Stomach (tissue), 19 donors: ENCODE measurements at regions of chr9 and their contacts with region 1.

Region 1: DNA sequence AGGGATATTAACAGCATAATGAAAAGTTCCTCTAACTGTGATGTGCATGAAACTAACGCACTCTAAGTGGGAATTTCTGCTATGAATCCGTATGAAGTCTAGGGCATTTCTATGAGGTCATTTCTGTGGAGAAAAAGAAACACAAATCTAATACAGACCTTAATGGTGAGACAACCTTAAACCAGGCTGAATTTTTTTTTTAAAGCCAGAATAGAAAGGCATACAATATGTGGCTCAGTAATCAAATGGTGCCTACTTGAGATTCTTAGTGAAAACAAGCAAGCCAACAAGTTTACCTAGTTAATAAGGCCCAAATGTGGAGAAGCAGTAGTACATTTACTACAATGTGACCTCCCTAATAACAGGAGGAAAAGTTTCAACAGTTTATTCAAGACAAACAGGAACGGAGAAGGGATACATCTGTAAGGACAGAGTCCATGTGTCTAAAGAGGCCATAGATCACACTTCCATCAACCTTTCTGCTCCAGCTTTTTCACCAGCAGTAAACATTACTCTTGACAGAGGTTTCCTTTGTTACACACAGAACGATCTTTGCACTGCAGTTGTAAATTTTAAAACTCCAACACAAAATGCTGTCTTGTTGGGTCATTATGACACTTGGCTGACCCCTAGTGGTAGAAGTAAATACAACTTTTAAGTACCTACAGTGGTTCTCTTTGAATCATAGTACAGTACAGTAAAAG is 26.2 kb downstream of the CARNMT1 start:
- DNase-seq: peak in 1 of 2 donors; percentile 94
- H3K4me3 ChIP-seq: no peak overlapping the region
- H3K27ac ChIP-seq: no peak overlapping the region
- H3K4me1 ChIP-seq: peaks cover 0 to 11% (median 7%) of the 10 kb centered on the region in 4 donors
- H3K27me3 ChIP-seq: no peaks in the 10 kb centered on the region
- CTCF ChIP-seq: peak in 5 of 7 experiments; percentile 56 to 86 (median 79)
- EP300 ChIP-seq: no peak
- POLR2A ChIP-seq: no peak

Region 2: GRCh38 chr9:74773886-74774479 is 227.9 kb before region 1 on chr9:
- intact Hi-C with region 1: loop called (anchors 5 kb)
- DNase-seq: peak; percentile 86 to 91
- H3K4me3 ChIP-seq: no peak overlapping the region
- H3K27ac ChIP-seq: no peak overlapping the region
- H3K4me1 ChIP-seq: peaks cover 0 to 8% (median 0%) of the 10 kb centered on the region in 4 donors
- H3K27me3 ChIP-seq: peaks cover 0 to 8% (median 0%) of the 10 kb centered on the region in 3 donors
- CTCF ChIP-seq: peak in 5 of 7 experiments; percentile 71 to 90 (median 80)
- EP300 ChIP-seq: no peak
- POLR2A ChIP-seq: no peak

Region 3: DNA sequence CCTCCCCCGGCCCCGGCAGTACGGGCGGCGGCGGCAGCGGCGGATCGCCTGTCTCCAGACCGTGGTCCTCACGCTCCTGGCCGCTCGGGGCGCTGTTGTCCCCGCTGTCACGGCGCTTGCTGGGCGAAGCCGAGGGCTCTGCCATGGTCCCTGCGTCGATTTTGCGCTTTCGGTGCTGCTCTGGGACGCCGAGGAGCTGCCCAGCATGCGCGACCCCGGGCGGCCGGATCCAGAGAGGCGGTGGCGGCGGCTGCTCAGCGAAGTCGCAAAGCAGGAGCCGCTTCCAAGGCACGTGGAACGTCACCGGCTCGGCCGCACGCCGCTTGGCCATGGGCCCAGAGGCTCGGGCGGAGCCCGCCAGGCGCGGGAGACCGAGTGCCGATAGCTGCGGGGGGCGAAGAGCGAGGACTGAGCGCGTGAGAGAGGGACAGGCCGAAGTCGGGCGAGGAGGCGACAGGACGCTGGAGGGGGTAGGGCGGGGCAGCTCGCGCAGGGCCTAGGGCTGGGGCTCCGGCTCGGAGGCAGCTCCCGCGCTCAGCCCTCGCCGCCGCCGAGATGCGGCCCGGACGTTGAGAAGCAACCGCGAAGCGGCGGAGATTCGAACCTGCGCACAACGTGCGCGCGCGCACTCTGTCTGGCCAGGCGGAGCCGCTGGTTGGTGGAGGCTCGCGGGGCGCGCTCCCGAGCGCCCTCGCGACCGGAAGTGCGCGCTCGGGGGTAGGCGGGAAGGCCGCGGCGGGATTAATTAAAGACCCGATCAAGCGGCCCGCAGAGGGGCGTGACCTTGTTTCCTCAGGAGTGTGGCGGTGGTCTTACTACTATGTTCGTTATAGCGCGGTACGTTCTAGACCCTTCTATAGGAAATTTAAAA is 49.4 kb before region 1 on chr9 and contains the start of gene C9orf40:
- intact Hi-C with region 1: no loop called
- DNase-seq: peak; percentile 91 to 97
- H3K4me3 ChIP-seq: peak within 1 kb of the TSS; percentile 72 to 91 (median 78)
- H3K27ac ChIP-seq: peak within 1 kb of the TSS; percentile 91 to 98 (median 97)
- H3K4me1 ChIP-seq: peaks cover 0 to 16% (median 6%) of the 10 kb centered on the region in 4 donors
- H3K27me3 ChIP-seq: no peaks in the 10 kb centered on the region
- CTCF ChIP-seq: peak in 5 of 7 experiments; percentile 49 to 90 (median 74)
- EP300 ChIP-seq: no peak
- POLR2A ChIP-seq: no peak
- total RNA-seq, gene C9orf40: 2.0 to 3.3 TPM in 2 of 5 donors, not detected in the others